Ascending aorta (tissue), 2 donors: ENCODE measurements at regions of chr11 and their contacts with region 1.

Region 1: GRCh38 chr11:124763156-124763947 is 1.3 kb upstream of the ESAM start:
- DNase-seq: peak in 1 of 2 donors; percentile 92
- H3K4me3 ChIP-seq: peak overlapping the region; percentile 62 to 67
- H3K27ac ChIP-seq: peak overlapping the region; percentile 79 to 85
- H3K4me1 ChIP-seq: peaks cover 3 to 21% of the 10 kb centered on the region in 2 donors
- H3K27me3 ChIP-seq: no peaks in the 10 kb centered on the region
- CTCF ChIP-seq: peak; percentile 26 to 75 (median 68)

Region 2: GRCh38 chr11:124644426-124645280 is 118.7 kb before region 1 on chr11:
- intact Hi-C with region 1: loop called (anchors 1 kb)
- DNase-seq: peak in 1 of 2 donors; percentile 79
- H3K4me3 ChIP-seq: peak overlapping the region in 1 of 2 donors; percentile 52
- H3K27ac ChIP-seq: peak overlapping the region; percentile 78 to 85
- H3K4me1 ChIP-seq: peaks cover 0 to 3% of the 10 kb centered on the region in 2 donors
- H3K27me3 ChIP-seq: no peaks in the 10 kb centered on the region
- CTCF ChIP-seq: peak; percentile 71 to 82 (median 75)

Region 3: DNA sequence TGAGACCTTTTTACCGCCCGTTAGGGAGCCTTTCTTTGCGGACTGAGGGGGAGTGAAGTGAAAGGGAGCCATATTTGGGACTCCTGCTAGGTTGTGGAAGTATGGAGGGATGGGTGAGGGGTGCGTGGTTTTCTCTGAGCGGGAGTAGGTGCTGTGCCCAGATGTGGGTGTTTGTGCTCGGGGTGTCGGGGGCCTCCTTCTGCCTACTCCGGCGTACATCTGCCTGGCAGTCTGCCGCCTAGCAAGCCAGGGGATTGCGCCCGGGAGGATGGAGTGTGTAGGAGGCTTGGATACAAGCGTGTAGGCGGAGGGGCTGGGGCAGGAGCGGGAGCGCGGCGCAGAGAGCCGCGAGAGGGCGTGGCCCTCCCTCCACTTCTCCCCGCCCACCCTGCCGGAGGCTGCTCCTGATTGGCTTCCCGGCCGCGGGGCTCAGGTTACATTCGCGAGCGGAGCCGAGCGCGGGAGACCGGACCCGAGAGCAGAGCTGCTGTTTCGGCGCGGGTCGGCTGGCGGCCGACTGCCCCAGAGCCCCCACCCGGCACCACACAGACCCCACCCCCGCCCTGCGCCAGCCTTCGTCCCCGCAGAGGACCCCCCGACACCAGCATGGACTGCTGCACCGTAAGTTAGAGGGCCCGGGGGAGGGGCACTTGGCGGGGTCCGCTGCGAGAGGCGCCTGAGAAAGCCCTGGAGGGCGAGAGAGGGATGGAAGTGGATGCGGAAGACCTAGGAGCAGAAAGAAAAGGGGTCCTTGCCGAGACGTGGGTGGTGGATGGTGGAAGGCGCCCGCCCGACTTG is 23.7 kb before region 1 on chr11 and contains the start of gene NRGN:
- intact Hi-C with region 1: loop called (anchors 1 kb)
- DNase-seq: peak; percentile 76 to 94
- H3K4me3 ChIP-seq: peak within 1 kb of the TSS; percentile 63 to 89
- H3K27ac ChIP-seq: peak within 1 kb of the TSS; percentile 28 to 78
- H3K4me1 ChIP-seq: peaks cover 13% of the 10 kb centered on the region in 2 donors
- H3K27me3 ChIP-seq: no peaks in the 10 kb centered on the region
- CTCF ChIP-seq: no peak
- total RNA-seq, gene NRGN: 5.3 TPM

Region 4: DNA sequence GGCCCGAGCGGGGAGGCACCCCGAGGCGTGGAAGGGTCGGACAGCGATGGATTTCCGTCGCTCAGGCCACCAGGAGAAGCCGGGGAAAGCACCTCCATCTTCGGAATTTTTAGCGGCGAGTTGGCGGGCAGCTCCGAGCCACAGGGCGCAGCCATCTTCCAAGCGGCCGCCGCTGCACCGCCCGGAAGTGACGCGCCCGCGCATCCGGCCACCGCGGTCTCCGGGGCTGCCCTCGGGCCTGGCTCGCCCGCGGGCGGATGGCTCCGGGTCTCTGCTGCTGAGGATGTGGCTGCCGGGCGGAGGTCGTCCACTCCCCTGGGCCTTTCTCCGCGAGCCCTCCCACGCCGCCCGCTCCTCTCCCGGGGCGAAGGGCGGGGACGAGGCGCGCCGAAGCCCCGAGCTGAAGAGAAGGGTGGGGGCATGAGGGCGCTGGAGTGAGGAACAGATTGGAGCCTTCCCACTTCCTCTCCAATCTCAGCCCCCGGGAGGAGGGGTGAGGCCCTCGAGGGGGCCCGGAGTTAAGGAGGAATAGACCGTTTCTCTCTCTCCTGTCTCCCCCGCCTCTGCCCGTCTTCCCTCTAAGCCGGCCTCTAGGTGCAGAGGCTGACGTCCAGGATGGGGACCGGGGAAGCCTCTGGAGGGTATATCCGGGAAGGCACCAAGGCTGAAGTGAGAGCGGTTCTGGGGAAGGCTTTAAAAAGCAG is 37.0 kb after region 1 on chr11 and contains the start of gene MSANTD2:
- intact Hi-C with region 1: loop called (anchors 1 kb)
- DNase-seq: peak; percentile 19 to 87
- H3K4me3 ChIP-seq: peak within 1 kb of the TSS; percentile 81 to 98
- H3K27ac ChIP-seq: peak within 1 kb of the TSS; percentile 99
- H3K4me1 ChIP-seq: peaks cover 13 to 16% of the 10 kb centered on the region in 2 donors
- H3K27me3 ChIP-seq: no peaks in the 10 kb centered on the region
- CTCF ChIP-seq: no peak
- total RNA-seq, gene MSANTD2: 21.4 TPM